ENCODE measurements at regions of chr10 and their contacts with region 1.

Region 1: GRCh38 chr10:89217057-89217990 is 10.2 kb upstream of the CH25H start:
- DNase-seq: peak; percentile 30
- H3K4me3 ChIP-seq: no peak overlapping the region; a peak in 1 of 4 replicates
- H3K27ac ChIP-seq: peak overlapping the region; percentile 30 to 55
- H3K4me1 ChIP-seq: peaks cover 4 to 14% of the 10 kb centered on the region in 2 experiments; a peak in 3 of 4 replicates
- H3K27me3 ChIP-seq: no peaks in the 10 kb centered on the region
- CTCF ChIP-seq: peak; percentile 91
- EP300 ChIP-seq: no peak
- RAD21 ChIP-seq: peak; percentile 78

Region 2: DNA sequence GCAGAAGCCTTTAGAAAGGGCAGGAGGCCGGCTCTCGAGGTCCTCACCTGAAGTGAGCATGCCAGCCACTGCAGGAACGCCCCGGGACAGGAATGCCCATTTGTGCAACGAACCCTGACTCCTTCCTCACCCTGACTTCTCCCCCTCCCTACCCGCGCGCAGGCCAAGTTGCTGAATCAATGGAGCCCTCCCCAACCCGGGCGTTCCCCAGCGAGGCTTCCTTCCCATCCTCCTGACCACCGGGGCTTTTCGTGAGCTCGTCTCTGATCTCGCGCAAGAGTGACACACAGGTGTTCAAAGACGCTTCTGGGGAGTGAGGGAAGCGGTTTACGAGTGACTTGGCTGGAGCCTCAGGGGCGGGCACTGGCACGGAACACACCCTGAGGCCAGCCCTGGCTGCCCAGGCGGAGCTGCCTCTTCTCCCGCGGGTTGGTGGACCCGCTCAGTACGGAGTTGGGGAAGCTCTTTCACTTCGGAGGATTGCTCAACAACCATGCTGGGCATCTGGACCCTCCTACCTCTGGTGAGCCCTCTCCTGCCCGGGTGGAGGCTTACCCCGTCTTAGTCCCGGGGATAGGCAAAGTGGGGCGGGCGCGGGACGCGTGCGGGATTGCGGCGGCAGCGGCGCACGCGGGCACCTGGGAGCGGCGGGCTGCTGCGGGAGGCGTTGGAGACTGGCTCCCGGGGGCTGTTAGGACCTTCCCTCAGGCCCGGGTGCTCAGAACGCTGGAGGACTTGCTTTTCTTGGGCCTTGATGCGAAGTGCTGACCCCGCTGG is 226.8 kb before region 1 on chr10 and contains the start of gene FAS:
- CTCF ChIA-PET with region 1: interaction called, 27 read pairs
- POLR2A ChIA-PET with region 1: no interaction called
- DNase-seq: peak; percentile 65
- H3K4me3 ChIP-seq: peak within 1 kb of the TSS; percentile 77 to 89
- H3K27ac ChIP-seq: peak within 1 kb of the TSS; percentile 60 to 81
- H3K4me1 ChIP-seq: peaks cover 8 to 28% of the 10 kb centered on the region in 2 experiments; a peak in 3 of 4 replicates
- H3K27me3 ChIP-seq: no peaks in the 10 kb centered on the region
- CTCF ChIP-seq: no peak
- EP300 ChIP-seq: no peak
- RAD21 ChIP-seq: no peak
- polyA plus RNA-seq, gene FAS: 31.5 and 44.2 TPM in 2 replicates

Region 3: DNA sequence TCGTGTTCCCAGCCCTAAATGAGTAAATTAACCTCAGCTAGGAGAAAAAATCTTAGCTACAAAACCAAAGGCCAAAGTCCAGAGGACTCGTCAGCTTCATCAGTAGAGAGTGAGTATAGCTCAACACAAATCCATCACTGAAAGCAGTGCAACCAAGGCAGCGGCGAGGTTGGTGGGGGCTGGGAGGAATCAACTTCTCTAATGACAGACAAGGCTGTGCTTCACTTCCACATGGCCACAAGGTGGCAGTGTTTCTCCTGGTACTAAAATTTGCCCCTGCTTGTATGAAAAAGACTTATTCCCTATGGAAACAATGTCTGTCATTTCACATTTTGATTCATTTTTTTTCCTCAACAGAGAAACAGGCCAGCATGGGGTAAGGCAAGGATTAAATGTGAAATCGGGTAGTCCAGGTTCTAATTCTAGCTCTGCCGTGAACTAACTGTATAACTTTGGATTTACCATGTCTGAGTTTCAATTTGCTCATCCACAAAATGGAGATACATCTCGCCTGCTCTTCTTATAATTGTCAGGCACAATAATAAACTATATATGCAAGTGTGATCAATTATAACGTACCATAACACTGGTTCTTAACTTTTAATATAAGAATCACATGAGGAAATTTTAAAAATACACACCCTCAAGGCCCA is 187.4 kb before region 1 on chr10:
- CTCF ChIA-PET with region 1: interaction called, 94 read pairs
- POLR2A ChIA-PET with region 1: no interaction called
- DNase-seq: peak; percentile 60
- H3K4me3 ChIP-seq: no peak overlapping the region; a peak in 1 of 4 replicates
- H3K27ac ChIP-seq: no peak overlapping the region
- H3K4me1 ChIP-seq: peaks cover 7 to 14% of the 10 kb centered on the region in 2 experiments; a peak in 3 of 4 replicates
- H3K27me3 ChIP-seq: no peaks in the 10 kb centered on the region
- CTCF ChIP-seq: peak; percentile 91
- EP300 ChIP-seq: no peak
- RAD21 ChIP-seq: peak; percentile 94

Region 4: DNA sequence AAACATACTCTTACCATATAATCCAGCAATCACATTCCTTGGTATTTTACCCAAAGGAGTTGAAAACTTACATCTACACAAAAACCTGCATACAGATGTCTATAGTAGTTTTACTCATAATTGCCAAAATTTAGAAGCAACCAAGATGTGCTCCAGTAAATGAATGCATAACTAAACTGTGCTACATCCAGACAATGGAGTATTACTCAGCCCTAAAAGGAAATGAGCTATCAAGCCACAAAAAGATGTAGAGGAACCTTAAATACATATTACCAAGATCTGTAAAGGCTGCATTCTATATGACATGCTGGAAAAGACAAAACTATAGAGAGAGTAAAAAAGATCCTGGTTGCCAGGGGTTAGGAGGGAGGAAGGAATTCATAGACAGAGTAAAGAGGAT is 11.6 kb after region 1 on chr10:
- CTCF ChIA-PET with region 1: interaction called, 21 read pairs
- POLR2A ChIA-PET with region 1: no interaction called
- DNase-seq: no peak
- H3K4me3 ChIP-seq: no peak overlapping the region
- H3K27ac ChIP-seq: no peak overlapping the region
- H3K4me1 ChIP-seq: no peaks in the 10 kb centered on the region
- H3K27me3 ChIP-seq: no peaks in the 10 kb centered on the region
- CTCF ChIP-seq: no peak
- EP300 ChIP-seq: no peak
- RAD21 ChIP-seq: no peak

Region 5: DNA sequence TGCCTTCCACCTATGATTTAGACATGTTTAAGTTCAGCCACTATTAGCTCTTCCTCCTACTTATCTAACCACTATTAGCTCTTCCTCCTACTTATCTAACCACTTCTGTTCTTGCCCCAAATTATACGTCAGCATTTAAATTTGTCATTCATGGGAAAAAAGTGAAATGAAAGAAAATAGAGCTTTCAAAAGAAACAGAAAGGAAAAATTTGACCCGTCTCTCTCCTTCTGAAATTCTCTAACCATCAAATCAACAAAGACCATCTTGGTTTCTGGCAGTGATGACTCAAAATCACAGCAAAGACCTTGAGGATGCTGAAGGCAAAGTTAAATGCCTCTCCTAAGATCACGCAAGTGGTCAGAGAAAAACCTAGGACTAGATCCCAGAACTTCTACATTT is 31.7 kb after region 1 on chr10:
- CTCF ChIA-PET with region 1: interaction called, 10 read pairs
- POLR2A ChIA-PET with region 1: no interaction called
- DNase-seq: no peak
- H3K4me3 ChIP-seq: no peak overlapping the region
- H3K27ac ChIP-seq: no peak overlapping the region
- H3K4me1 ChIP-seq: peaks cover 0 to 6% of the 10 kb centered on the region in 2 experiments; a peak in 2 of 4 replicates
- H3K27me3 ChIP-seq: no peaks in the 10 kb centered on the region
- CTCF ChIP-seq: no peak
- EP300 ChIP-seq: no peak
- RAD21 ChIP-seq: no peak